ENCODE measurements at regions of chr17 and their contacts with region 1.

Region 1: GRCh38 chr17:81666342-81667191 is at the starts of genes CCDC137 and OXLD1:
- DNase-seq: peak; percentile 60
- ATAC-seq: peak; percentile 98
- H3K4me3 ChIP-seq: peak within 1 kb of the TSS; percentile 86 to 88
- H3K27ac ChIP-seq: peak within 1 kb of the TSS; percentile 99
- H3K4me1 ChIP-seq: peaks cover 21% of the 10 kb centered on the region
- H3K27me3 ChIP-seq: no peaks in the 10 kb centered on the region
- CTCF ChIP-seq: no peak
- total RNA-seq, gene CCDC137: 74.6 TPM
- total RNA-seq, gene OXLD1: 42.8 TPM

Region 2: DNA sequence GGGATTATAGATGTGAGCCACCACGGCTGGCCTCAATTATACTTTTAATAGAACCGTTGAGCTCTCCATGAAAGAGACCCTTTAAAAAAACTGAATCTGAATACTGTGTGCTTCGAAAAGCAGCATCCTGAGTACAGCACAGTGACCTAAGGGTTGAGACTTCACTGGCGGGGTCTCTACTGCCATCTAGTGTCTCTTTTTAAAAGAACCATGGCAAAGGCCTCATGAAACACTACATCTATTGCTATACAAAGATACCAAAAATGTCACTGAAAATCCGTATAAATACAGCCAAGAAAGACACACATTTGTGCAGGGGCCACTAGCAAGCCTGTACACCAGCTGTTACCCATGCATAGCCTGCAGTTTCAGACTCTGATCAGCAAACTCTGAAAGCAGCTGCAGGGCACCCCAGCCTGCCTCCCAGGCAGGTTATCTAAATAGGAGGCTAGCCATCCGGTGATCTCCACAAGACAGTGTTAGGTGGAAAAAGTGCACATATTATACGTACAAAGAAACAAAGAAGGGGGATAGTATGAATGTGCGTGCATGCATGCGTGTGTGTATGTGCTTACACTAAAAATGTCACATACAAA is 64.9 kb before region 1 on chr17:
- CTCF ChIA-PET with region 1: no interaction called
- POLR2A ChIA-PET with region 1: no interaction called
- in situ Hi-C with region 1: no loop called
- intact Hi-C with region 1: no loop called
- DNase-seq: peak; percentile 42
- ATAC-seq: peak; percentile 96
- H3K4me3 ChIP-seq: no peak overlapping the region
- H3K27ac ChIP-seq: peak overlapping the region; percentile 82
- H3K4me1 ChIP-seq: peaks cover 24% of the 10 kb centered on the region
- H3K27me3 ChIP-seq: no peaks in the 10 kb centered on the region
- CTCF ChIP-seq: peak; percentile 93

Region 3: DNA sequence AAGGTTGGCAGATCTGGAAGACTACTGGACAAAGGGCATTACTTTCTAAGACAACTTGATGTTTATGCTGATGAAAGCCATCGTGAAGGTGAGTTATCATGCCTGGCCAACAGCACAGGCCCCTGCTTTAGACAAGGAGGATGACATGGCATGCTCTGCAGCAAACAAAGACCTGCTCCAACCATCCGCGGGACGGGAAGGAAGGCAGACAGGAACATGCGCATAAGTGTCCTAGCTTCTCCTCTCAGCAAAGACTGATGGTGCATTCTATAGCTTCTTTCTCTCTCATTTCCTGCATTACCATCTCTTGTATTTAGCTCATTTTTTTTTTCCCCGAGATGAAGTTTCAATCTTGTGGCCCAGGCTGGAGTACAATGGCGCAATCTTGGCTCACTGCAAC is 35.1 kb before region 1 on chr17:
- CTCF ChIA-PET with region 1: no interaction called
- POLR2A ChIA-PET with region 1: no interaction called
- in situ Hi-C with region 1: no loop called
- intact Hi-C with region 1: loop called (anchors 5 kb)
- DNase-seq: no peak
- ATAC-seq: no peak
- H3K4me3 ChIP-seq: no peak overlapping the region
- H3K27ac ChIP-seq: no peak overlapping the region
- H3K4me1 ChIP-seq: 0 out of 2 replicates have a peak, but pooled peaks cover 3% of the 10 kb centered on the region
- H3K27me3 ChIP-seq: no peaks in the 10 kb centered on the region
- CTCF ChIP-seq: no peak

Region 4: DNA sequence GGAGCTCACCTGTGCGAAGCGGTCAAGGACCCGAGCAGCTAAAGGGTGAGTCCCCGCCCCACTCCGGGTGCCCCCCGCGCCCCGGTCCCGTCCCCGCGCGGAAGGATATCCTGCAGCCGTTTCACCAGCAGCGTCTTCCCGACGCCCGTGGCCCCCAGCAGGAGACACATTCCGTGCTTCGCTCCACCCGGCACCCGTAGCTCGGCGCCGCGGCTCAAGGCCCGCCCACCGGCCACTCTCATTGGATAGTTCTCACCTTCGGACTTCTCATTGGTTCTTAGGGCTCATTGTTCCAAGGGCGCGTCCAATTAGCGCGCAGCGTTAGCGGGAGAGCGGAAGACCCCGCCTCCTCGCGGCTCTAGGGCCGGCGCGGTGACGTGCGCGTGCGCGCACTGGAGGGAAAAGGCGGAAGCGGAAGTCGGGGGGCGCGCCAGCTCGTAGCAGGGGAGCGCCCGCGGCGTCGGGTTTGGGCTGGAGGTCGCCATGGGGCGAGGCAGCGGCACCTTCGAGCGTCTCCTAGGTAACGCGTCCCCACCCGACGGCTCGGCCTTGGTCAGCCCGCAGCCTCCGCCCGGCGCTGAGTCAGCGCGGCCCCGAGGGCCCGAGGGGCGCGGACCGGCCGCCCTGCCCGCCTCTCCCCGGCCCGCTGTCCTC is 17.1 kb after region 1 on chr17 and contains the starts of genes ARL16 and HGS:
- CTCF ChIA-PET with region 1: interaction called, 3 read pairs
- POLR2A ChIA-PET with region 1: interaction called, 12 read pairs
- in situ Hi-C with region 1: no loop called
- intact Hi-C with region 1: no loop called
- DNase-seq: peak; percentile 92
- ATAC-seq: peak; percentile 95
- H3K4me3 ChIP-seq: peak within 1 kb of the TSS; percentile 71 to 78
- H3K27ac ChIP-seq: peak within 1 kb of the TSS; percentile 96
- H3K4me1 ChIP-seq: peaks cover 23% of the 10 kb centered on the region
- H3K27me3 ChIP-seq: no peaks in the 10 kb centered on the region
- CTCF ChIP-seq: no peak
- total RNA-seq, gene ARL16: 52.7 TPM
- total RNA-seq, gene HGS: 240 TPM

Region 5: GRCh38 chr17:82110298-82110697 is 443.7 kb after region 1 on chr17:
- CTCF ChIA-PET with region 1: no interaction called
- POLR2A ChIA-PET with region 1: no interaction called
- in situ Hi-C with region 1: no loop called
- intact Hi-C with region 1: no loop called
- DNase-seq: no peak
- ATAC-seq: no peak
- H3K4me3 ChIP-seq: no peak overlapping the region
- H3K27ac ChIP-seq: no peak overlapping the region
- H3K4me1 ChIP-seq: peaks cover 28% of the 10 kb centered on the region
- H3K27me3 ChIP-seq: no peaks in the 10 kb centered on the region
- CTCF ChIP-seq: no peak

Measured in Panc1 (cell line).